ENCODE measurements at regions of chr4 and their contacts with region 1.

Region 1: DNA sequence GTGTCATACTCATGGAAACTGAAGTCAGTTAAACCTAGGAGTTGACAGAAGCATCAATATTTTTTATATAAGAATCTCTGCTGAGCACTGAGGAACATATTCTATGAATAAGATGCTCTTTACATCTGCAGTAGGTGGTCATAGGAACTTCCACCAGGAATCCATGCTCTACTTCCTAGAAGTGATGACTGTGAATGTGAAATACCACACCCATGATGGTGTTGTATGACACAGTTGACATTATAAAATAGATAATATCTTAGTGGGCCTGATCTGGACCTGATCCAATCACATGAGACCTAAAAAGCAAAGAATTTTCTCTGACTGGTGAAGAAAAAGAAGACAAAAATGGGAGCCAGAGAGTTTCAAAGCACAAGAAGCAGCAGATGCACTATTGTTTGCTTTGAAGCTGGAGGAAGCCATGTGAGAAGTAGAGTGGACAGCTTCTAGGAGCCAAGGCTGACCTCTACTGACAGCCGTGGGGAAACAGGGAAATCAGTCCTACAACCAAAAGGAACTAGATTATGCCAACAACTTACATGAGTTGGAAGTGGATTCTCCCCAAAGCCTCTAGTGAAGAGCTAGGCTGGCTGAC is 68.6 kb upstream of the HS3ST1 start:
- DNase-seq: peak; percentile 79
- H3K4me3 ChIP-seq: no peak overlapping the region
- H3K27ac ChIP-seq: peak overlapping the region; percentile 93
- H3K4me1 ChIP-seq: peaks cover 38% of the 10 kb centered on the region
- H3K27me3 ChIP-seq: no peaks in the 10 kb centered on the region
- CTCF ChIP-seq: peak; percentile 42 to 52

Region 2: DNA sequence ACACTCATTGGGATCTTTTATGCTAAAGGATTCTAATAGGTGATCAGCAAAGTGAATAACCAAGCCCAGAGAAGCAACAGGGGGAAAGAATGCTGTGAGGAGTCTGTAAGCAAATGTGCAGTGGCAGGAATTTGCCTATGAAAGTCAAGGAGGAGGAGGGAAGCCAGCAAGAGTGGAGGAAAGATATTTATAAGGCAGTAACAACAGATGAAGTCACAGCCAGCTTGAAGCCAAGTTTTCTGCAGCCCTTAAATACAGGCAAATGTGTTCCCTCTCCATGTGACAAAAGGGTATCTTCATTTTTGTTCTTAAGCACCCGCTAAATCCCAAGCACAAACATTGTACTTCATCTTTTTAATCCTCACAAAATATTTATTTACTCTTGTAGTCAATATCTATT is 537.7 kb before region 1 on chr4:
- CTCF ChIA-PET with region 1: no interaction called
- dilution Hi-C with region 1: no loop called
- in situ Hi-C with region 1: no loop called
- intact Hi-C with region 1: loop called (anchors 10 kb)
- DNase-seq: no peak
- H3K4me3 ChIP-seq: no peak overlapping the region
- H3K27ac ChIP-seq: no peak overlapping the region
- H3K4me1 ChIP-seq: peaks cover 3% of the 10 kb centered on the region
- H3K27me3 ChIP-seq: no peaks in the 10 kb centered on the region
- CTCF ChIP-seq: no peak

Region 3: GRCh38 chr4:11623726-11624037 is 126.4 kb after region 1 on chr4:
- CTCF ChIA-PET with region 1: no interaction called
- dilution Hi-C with region 1: no loop called
- in situ Hi-C with region 1: loop called in 1 of 2 experiments (anchors 10 kb)
- intact Hi-C with region 1: loop called (anchors 2 kb)
- DNase-seq: peak; percentile 57
- H3K4me3 ChIP-seq: no peak overlapping the region
- H3K27ac ChIP-seq: peak overlapping the region; percentile 91
- H3K4me1 ChIP-seq: peaks cover 60% of the 10 kb centered on the region
- H3K27me3 ChIP-seq: no peaks in the 10 kb centered on the region
- CTCF ChIP-seq: peak in 1 of 2 donors; percentile 72

Region 4: GRCh38 chr4:11635359-11636072 is 138.2 kb after region 1 on chr4:
- CTCF ChIA-PET with region 1: no interaction called
- dilution Hi-C with region 1: no loop called
- in situ Hi-C with region 1: loop called in 1 of 2 experiments (anchors 10 kb)
- intact Hi-C with region 1: no loop called
- DNase-seq: peak; percentile 91
- H3K4me3 ChIP-seq: no peak overlapping the region
- H3K27ac ChIP-seq: peak overlapping the region; percentile 96
- H3K4me1 ChIP-seq: peaks cover 45% of the 10 kb centered on the region
- H3K27me3 ChIP-seq: no peaks in the 10 kb centered on the region
- CTCF ChIP-seq: no peak

Region 5: DNA sequence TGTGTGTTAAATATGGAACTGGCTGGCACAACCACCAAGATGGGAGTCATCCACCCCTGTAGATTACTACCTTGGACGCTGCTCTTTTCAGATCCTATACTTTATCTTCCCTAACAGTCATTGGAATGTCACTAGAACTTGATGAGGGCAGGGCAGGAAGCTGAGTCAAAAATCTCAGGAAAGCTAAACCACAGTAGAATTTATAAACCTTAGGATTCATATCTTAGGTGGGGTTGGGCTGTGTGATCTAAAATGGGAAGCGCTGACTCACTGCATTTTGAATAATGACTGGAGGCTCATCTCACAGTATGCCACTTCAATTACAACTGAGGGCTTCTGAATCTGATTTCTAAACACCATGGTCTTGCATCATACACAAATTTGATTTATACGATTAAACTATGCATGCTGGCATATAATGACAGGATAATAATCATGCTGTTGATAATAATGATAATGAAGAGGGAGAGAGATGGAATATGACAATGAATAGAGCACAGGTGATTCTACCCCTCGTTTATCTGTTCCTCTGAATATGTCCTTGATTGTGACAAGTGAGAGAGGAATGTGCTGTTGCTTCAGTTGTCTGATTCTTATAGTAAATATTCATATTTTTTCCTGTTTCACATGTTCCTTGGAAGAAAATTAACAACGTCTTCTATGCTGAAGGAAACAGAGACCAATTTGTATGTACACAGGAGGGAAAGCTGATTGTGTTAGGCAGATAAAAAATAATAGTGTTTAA is 201.7 kb after region 1 on chr4:
- CTCF ChIA-PET with region 1: no interaction called
- dilution Hi-C with region 1: no loop called
- in situ Hi-C with region 1: no loop called
- intact Hi-C with region 1: loop called (anchors 1 kb)
- DNase-seq: peak; percentile 91
- H3K4me3 ChIP-seq: no peak overlapping the region
- H3K27ac ChIP-seq: peak overlapping the region; percentile 91
- H3K4me1 ChIP-seq: peaks cover 56% of the 10 kb centered on the region
- H3K27me3 ChIP-seq: no peaks in the 10 kb centered on the region
- CTCF ChIP-seq: no peak

Region 6: DNA sequence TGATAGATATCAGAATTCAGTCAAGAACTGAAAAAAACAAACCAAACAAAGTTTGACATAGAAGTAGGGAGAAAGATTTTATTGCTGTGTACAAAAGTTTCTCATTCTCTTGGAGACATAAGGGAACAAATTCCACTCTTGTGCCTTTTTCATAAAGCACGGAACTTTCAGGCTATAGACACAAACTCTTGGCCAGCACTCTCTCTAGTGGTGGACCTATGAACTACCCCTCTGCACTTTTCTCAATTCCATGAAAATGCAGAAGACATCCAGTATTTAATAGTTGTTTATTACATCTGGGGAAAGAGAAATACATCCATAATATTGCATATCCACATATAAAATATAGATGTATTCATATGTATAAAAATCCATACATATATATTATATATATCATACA is 223.0 kb after region 1 on chr4:
- CTCF ChIA-PET with region 1: interaction called, 5 read pairs
- dilution Hi-C with region 1: no loop called
- in situ Hi-C with region 1: no loop called
- intact Hi-C with region 1: loop called (anchors 1 kb)
- DNase-seq: peak; percentile 43
- H3K4me3 ChIP-seq: no peak overlapping the region
- H3K27ac ChIP-seq: peak overlapping the region; percentile 6
- H3K4me1 ChIP-seq: peaks cover 7% of the 10 kb centered on the region
- H3K27me3 ChIP-seq: no peaks in the 10 kb centered on the region
- CTCF ChIP-seq: peak; percentile 89 to 95

Region 7: DNA sequence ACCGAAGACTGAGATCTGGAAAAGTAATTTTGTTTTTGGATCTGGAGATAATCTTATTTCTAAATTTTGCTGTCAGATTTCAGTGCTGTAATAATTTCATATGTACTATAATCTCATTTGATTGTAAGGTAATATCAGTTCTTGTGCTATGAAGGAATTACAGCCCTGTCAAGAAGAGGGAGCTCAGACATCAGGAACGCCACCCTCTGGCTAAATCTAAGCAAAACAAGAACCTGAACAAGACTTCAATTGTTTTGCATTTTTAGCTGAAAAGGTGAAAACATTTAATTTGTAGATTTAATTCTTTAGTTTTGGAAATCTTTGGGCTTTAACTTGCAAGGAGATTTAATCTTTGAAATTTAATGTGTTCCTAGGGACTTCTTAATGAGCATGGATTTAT is 456.8 kb after region 1 on chr4:
- CTCF ChIA-PET with region 1: no interaction called
- dilution Hi-C with region 1: no loop called
- in situ Hi-C with region 1: no loop called
- intact Hi-C with region 1: loop called (anchors 5 kb)
- DNase-seq: peak; percentile 8
- H3K4me3 ChIP-seq: no peak overlapping the region
- H3K27ac ChIP-seq: no peak overlapping the region
- H3K4me1 ChIP-seq: no peaks in the 10 kb centered on the region
- H3K27me3 ChIP-seq: no peaks in the 10 kb centered on the region
- CTCF ChIP-seq: peak; percentile 37 to 60

Measured in mammary epithelial cell (primary cell).